AG04449 (cell line): ENCODE measurements at regions of chr17 and their contacts with region 1.

Region 1: GRCh38 chr17:45104907-45105574 is 27.3 kb downstream of the PLCD3 start:
- DNase-seq: no peak
- H3K4me3 ChIP-seq: no peak overlapping the region
- CTCF ChIP-seq: no peak

Region 2: DNA sequence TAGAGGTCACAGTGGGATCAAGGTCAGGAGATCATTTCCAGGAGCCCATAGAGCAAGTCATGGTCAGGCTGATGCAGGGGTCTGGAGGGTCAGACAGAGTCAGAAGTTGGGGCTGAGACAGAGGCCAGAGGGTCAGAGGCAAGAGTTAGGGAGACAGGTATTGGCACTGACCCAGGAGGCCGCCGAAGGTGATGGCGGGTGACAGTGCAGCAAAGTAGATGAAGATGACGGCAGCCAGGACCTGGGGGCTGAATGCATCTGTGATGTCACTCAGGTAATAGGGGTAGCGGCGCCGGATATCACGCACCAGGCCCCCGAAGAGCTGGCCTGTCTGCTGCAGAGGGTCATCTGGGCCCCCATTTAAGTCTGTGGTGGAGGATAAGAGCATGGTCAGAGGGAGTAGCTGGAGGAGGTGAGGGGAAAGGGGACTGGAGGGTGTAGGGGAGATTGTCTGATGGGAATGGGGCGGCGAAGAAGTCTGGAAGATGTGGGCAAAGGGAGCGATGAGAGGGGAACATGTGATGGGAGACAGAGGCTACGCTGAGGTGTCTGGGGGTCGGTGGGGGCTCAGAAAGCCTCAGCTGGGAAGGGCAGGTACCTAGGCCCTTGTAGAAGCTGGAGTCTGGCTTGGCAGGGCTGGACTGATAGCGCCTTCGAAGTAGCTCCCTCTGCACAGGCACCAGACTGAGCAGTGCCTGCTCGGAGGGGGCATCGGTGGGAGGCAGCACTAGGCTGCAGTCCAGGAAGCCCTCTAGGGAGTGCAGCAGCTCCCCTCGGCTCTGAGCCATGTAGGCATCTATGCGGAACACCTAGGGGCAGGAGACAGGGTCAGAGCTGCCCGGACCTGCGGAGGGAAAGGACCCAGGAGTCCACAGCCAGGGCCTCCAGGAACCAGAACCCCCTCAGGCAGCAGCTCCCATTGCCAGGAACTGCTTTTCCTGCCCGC is 847.0 kb before region 1 on chr17:
- CTCF ChIA-PET with region 1: no interaction called
- POLR2A ChIA-PET with region 1: no interaction called
- DNase-seq: no peak
- H3K4me3 ChIP-seq: no peak overlapping the region
- CTCF ChIP-seq: no peak

Region 3: DNA sequence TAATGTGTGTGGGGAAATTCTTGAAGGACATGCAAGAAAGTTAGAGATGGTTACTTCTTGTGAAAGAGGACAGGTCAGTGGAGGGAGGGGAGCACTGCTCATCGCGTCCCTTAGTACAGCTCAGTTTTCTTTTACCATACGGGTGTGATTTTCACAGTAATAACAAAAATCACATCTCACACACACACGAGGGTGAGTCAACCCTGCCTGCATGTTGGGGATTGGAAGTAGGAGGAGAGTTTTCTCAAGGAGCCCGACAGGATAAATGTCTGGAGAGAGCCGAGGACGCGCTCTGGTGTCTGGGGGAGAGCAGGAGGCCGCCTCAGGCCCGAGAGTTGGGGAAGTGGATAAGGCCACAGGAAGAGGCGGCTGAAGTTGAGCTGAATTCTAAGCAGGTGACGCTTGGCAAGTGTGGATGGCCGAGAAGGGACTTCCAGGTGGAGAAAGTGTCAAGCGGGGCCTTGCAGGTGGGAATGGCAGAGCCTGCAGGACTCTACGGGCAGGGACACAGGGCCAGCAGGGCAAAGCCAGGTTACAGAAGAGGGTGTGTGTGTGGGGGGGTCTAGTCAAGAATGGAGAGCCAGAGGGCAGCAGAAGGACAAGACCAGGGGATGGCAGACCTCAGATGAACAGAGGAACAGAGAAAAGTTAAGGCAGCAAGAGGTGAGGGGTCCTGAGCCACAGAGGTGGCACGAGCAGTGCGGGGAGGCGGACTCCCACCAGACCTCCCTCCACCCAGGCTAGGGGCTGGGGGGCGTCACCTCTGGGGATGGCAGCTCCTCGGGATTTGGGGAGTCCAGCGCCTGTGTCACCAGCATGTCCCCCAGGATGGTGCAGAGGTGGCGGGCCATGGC is 11.1 kb after region 1 on chr17:
- CTCF ChIA-PET with region 1: interaction called, 123 read pairs
- POLR2A ChIA-PET with region 1: interaction called, 3 read pairs
- DNase-seq: no peak
- H3K4me3 ChIP-seq: no peak overlapping the region
- CTCF ChIP-seq: no peak

Region 4: GRCh38 chr17:45123930-45124796 is 19.1 kb after region 1 on chr17:
- CTCF ChIA-PET with region 1: interaction called, 123 read pairs
- POLR2A ChIA-PET with region 1: interaction called, 3 read pairs
- DNase-seq: no peak
- H3K4me3 ChIP-seq: no peak overlapping the region
- CTCF ChIP-seq: no peak

Region 5: DNA sequence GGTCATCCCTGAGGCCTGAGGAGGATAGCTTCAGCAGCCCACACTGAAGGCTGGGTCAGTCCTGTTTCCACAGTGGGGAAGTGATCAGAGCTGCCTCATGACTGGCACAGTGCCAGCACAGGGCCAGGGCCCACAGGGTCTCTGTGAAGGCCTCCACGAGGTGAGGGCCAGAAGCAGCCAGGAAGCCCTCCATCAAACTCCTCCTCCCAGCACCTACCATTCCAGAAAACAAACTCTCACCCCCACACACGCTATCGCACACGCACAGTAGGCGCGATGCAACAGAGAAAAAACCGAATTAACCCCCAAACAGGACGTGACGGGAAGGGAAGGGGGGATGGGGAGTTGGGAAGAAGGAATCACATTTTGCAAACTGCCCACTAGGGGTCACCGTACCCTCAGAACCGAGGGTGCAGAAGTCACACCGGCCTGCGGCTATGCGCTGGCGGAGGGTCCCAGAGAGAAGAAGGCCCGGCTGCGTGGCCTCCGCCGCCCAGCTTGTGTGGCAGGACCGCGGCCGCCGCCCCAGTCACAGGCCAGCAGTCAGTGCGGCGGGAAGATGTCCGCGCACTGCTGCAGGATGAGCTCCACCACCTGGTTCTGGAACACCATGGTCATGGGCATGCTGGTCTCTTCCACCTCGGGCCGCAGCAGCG is 290.0 kb after region 1 on chr17:
- CTCF ChIA-PET with region 1: no interaction called
- POLR2A ChIA-PET with region 1: no interaction called
- DNase-seq: no peak
- H3K4me3 ChIP-seq: peak overlapping the region; percentile 51
- CTCF ChIP-seq: peak; percentile 81